ENCODE measurements at regions of chr7 and their contacts with region 1.

Region 1: GRCh38 chr7:73519867-73520672 is 2.0 kb downstream of the BAZ1B start:
- DNase-seq: no peak
- H3K4me3 ChIP-seq: peak overlapping the region; percentile 78
- CTCF ChIP-seq: no peak

Region 2: DNA sequence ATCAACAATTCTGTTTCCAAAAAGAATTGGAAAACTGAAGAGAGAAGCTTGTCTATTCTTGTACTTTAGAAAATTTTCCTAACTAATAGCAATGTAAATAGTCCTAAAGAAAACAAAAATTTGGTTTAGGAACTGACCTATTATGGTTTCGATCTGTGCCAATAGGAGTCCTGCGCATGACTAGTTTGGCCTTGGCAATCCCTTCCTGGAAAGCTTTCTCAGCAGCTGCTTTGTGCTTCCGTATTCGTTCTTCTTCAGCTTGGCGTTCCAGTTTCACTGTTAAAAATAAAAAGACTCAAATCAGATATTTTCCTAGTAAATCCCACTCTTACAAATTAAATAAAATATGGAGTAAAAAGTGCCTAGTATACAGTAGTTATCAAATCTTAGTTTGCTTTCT is 49.9 kb before region 1 on chr7:
- in situ Hi-C with region 1: loop called (anchors 5 kb)
- DNase-seq: no peak
- H3K4me3 ChIP-seq: no peak overlapping the region
- CTCF ChIP-seq: no peak

Region 3: DNA sequence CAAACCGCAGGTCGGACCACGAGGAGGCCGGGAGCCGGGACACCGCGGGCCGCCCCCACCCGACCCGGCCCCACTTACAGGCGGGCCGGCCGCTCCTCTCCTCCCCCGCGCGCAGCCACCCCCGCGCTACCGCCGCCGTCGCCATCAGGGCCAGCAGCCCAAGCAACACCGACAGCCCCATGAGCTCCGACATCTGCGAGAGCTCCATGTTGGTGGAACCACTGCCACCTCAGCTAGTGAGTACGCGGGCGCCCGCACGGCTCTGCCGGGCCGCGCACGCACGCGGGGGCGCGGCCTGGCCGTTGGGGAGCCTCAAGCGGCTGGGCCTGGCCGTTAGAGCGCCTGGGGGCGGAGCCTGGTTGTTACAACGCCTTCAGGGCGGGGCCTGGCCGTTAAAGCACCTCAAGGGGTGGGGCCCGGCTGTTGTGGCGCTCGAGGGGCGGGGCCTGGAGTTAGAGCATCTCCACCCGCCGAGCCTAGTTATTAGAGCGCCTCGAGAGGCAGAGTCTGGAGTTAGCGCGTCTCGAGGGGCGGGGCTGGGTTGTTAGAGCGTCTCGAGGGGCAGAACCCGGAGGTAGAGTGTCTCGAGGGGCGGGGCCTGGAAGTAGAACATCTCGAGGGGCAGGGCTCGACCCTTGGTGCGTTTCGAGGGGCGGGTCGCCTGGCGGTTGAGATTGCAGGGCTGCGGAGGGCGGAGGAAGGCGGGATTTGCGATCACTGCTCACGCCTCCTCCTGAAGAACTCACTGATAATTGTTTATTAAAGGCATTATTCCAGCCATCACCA is 58.5 kb after region 1 on chr7 and contains the start of gene TBL2:
- in situ Hi-C with region 1: no loop called
- DNase-seq: peak; percentile 97
- H3K4me3 ChIP-seq: peak within 1 kb of the TSS; percentile 94
- CTCF ChIP-seq: peak; percentile 16